Activated T-helper 2 cell treated with anti-CD3 and anti-CD28 coated beads, Interferon-gamma antibody, Interleukin-2, Interleukin-4, amounts not matched to agents 10 μg/mL and 5 μg/mL and 100 μg/mL, durations not matched to agents 14 hours and 24 hours and 36 hours (primary cell): ENCODE measurements at regions of chr21 and their contacts with region 1.

Region 1: GRCh38 chr21:35150562-35151226 is 101.6 kb upstream of the RUNX1 start:
- DNase-seq: no peak
- H3K4me3 Mint-ChIP-seq: no peak overlapping the region
- H3K27ac Mint-ChIP-seq: peak overlapping the region; percentile 88
- H3K4me1 Mint-ChIP-seq: peaks cover 52% of the 10 kb centered on the region
- H3K27me3 Mint-ChIP-seq: no peaks in the 10 kb centered on the region

Region 2: GRCh38 chr21:34908419-34909055 is 242.2 kb before region 1 on chr21:
- intact Hi-C with region 1: no loop called
- DNase-seq: no peak
- H3K4me3 Mint-ChIP-seq: no peak overlapping the region
- H3K27ac Mint-ChIP-seq: no peak overlapping the region
- H3K4me1 Mint-ChIP-seq: peaks cover 65% of the 10 kb centered on the region
- H3K27me3 Mint-ChIP-seq: no peaks in the 10 kb centered on the region

Region 3: GRCh38 chr21:34996304-34997101 is 154.2 kb before region 1 on chr21:
- intact Hi-C with region 1: no loop called
- DNase-seq: no peak
- H3K4me3 Mint-ChIP-seq: peak overlapping the region; percentile 27
- H3K27ac Mint-ChIP-seq: peak overlapping the region; percentile 86
- H3K4me1 Mint-ChIP-seq: peaks cover 62% of the 10 kb centered on the region
- H3K27me3 Mint-ChIP-seq: no peaks in the 10 kb centered on the region

Region 4: GRCh38 chr21:35400233-35400957 is 249.7 kb after region 1 on chr21:
- intact Hi-C with region 1: loop called (anchors 5 kb)
- DNase-seq: peak; percentile 20
- H3K4me3 Mint-ChIP-seq: peak overlapping the region; percentile 15
- H3K27ac Mint-ChIP-seq: peak overlapping the region; percentile 48
- H3K4me1 Mint-ChIP-seq: peaks cover 26% of the 10 kb centered on the region
- H3K27me3 Mint-ChIP-seq: no peaks in the 10 kb centered on the region